Endothelial cell of umbilical vein (primary cell): ENCODE measurements at regions of chr7 and their contacts with region 1.

Region 1: DNA sequence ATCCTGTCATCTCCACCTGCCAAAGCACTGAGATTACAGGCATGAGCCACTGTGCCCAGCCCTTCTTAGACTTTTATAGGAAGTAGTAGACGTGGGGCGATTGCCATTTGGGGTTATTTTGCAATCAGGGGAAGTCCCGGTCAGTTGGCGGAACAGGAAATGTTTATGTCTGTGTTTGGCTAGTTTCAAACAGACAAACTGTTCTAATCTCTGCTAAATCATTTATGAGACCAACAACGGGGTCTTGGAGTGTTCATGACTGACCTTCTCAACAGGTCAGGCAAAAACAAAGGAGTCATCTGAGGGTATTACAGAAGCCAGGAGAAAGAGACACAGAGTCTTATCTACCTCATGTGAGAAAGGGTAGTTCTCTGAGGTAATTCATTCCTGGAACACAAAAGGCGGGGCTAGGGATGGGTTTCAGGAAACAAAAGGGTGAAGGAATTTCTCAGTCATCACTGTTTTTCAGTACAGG is 6.6 kb upstream of the TPK1 start:
- DNase-seq: peak; percentile 70
- H3K4me3 ChIP-seq: peak overlapping the region in 1 of 3 experiments; percentile 27
- H3K27ac ChIP-seq: peak overlapping the region; percentile 83
- H3K4me1 ChIP-seq: peaks cover 10% of the 10 kb centered on the region
- H3K27me3 ChIP-seq: no peaks in the 10 kb centered on the region
- CTCF ChIP-seq: no peak
- POLR2A ChIP-seq: no peak

Region 2: GRCh38 chr7:144468990-144469732 is 373.3 kb before region 1 on chr7:
- CTCF ChIA-PET with region 1: no interaction called
- POLR2A ChIA-PET with region 1: no interaction called
- dilution Hi-C with region 1: no loop called
- intact Hi-C with region 1: no loop called
- DNase-seq: no peak
- H3K4me3 ChIP-seq: no peak overlapping the region
- H3K27ac ChIP-seq: no peak overlapping the region
- H3K4me1 ChIP-seq: no peaks in the 10 kb centered on the region
- H3K27me3 ChIP-seq: no peaks in the 10 kb centered on the region
- CTCF ChIP-seq: no peak
- POLR2A ChIP-seq: no peak

Region 3: DNA sequence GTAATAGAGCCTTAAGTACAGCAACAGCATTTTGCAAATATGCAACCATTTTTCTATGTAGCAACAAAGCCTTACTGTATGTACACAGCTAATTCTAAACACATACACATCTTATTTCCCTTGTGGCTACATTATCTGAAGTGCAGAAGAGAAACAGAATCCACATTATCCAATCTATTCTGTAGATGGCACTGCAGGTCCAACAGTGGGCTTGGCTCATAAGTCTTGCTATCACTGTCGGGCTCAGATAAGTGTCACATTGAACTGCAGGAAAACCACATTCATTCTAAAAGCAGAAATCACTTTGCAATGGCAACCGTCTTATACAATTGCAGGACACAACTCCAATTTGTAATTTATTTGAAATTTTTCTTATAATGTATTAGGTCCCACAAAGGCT is 329.1 kb before region 1 on chr7:
- CTCF ChIA-PET with region 1: no interaction called
- POLR2A ChIA-PET with region 1: no interaction called
- dilution Hi-C with region 1: no loop called
- intact Hi-C with region 1: loop called (anchors 10 kb)
- DNase-seq: peak; percentile 65
- H3K4me3 ChIP-seq: no peak overlapping the region
- H3K27ac ChIP-seq: no peak overlapping the region
- H3K4me1 ChIP-seq: no peaks in the 10 kb centered on the region
- H3K27me3 ChIP-seq: no peaks in the 10 kb centered on the region
- CTCF ChIP-seq: peak in 1 of 2 donors; percentile 37
- POLR2A ChIP-seq: no peak

Region 4: GRCh38 chr7:144854839-144855424 is 12.5 kb after region 1 on chr7:
- CTCF ChIA-PET with region 1: interaction called, 10 read pairs
- POLR2A ChIA-PET with region 1: no interaction called
- dilution Hi-C with region 1: no loop called
- intact Hi-C with region 1: no loop called
- DNase-seq: peak; percentile 40
- H3K4me3 ChIP-seq: no peak overlapping the region
- H3K27ac ChIP-seq: no peak overlapping the region
- H3K4me1 ChIP-seq: no peaks in the 10 kb centered on the region
- H3K27me3 ChIP-seq: peaks cover 0 to 2% of the 10 kb centered on the region in 2 experiments
- CTCF ChIP-seq: peak; percentile 26 to 43
- POLR2A ChIP-seq: no peak